ENCODE measurements at regions of chr15 and their contacts with region 1.

Region 1: DNA sequence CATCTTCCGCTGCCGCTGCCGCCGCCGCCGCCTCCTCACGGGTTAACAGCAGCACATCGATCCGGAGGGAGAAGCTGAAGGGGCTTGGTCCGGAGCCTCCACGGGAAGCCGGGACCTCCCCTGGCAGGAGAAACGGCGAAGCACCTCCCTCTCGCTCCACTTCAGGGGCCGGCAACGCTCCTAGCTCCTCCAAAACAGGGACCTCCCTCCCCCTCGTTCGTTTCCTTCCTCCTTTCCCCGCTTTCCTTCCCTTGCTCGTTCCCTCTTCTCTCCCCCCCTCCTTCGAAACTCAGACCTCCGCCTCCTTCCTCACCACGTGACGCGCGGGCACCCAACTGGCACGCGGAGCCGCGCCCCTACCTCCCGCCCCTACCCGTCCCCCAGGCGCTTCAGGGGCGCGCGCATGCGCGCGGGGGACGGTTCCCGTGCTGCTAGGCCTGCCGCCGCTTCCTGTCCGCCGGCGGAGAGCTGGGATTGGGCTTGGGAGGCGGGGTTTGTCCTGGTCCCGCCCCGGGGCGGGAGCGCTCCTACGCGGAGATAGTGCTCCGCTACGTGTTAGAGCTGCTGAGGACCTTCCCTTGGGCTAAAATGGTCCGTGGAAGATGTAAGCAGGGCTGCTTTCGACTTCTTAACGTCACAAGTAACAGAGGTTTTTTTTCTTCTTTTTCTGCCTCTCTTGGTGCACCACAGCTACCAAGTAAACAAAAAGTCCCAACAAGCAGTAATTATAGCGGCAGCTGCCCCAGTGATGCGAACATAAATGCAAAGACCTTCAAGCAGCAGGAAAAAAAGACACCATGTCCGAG is at the start of gene ADAM10:
- DNase-seq: peak; percentile 100
- total RNA-seq, gene ADAM10: 85.9 TPM

Region 2: DNA sequence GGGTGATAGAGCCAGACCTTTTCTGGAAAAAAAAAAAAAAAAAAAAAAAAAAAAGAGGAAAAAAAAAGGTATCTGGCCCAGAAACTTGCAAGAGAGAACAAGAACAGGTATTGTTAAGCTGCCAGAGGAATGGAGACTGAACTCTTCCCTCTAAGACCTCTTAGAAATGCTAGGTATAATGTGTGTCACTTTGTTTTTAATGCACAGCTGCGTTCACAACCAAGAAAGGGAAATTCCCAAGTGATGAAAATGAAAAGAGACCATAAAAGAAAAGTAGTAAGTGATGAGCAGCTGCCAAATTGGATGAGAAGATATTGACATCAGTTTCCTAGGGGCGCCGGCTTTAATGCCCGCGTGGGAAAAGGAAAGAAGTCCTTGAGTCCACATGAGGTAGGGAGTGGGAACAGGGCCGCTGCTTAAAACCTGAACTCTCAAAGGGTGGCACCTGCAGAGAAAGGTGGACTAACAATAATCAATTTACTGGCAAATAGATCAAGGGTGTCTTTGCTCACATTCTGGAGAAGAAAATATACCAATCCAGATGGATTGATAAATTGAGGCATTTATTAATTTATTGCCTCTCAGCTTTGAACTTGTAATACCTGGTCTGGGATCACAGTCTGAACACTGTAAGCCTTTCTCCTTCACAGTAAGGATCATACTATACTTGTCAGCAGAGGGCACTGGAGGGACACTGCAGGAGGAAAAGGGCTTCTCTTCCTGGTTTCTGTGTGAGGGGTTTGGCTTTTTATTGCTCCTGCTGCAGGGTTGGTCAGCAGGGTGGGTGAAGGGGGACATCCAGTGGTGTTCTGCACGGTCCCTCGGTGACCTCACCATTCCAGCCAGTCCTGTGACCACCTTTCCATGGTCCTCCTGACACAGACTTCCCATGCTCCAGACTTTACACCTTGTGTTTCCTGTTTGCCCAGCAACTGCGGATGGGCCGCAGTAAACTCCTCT is 480.0 kb before region 1 on chr15:
- intact Hi-C with region 1: loop called (anchors 5 kb)
- DNase-seq: no peak

Region 3: DNA sequence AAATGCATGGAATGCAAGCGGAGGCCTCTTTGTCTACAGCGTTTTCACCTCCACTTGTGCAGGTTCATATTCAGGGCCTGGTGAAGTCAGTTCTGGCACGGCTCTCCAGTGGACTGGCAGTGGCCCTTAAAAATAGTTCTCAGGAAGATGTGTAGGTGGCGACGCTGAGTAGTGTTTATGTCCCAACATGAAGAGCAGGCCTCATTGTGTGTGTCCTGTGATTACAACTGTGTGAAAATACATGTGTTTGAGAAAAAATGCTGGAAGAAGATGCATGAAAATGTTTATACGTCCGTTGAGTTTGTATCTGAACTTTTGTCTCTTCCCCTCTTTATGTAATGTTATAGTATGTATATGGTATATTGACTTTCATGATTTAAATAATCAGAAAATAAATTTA is 310.8 kb before region 1 on chr15:
- intact Hi-C with region 1: loop called (anchors 5 kb)
- DNase-seq: no peak

Region 4: DNA sequence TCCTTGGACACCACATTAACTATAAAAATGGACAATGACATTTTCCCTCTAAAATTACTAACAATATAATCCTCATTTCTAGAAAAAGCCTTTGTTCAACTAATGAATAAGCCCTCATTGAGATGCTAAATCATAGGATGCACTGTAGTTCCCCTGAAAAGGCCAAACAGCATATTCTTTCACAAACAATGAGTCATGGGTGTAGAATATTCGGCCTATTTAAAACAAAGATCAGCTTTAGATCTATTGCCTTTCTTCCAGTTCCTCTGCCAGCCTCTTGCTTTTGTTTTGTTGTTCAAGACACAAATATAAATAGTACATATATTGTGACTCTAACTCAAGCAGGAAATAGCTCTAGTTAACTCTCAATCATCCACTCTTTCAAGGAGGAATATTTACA is 82.8 kb before region 1 on chr15:
- intact Hi-C with region 1: loop called (anchors 5 kb)
- DNase-seq: no peak

Region 5: DNA sequence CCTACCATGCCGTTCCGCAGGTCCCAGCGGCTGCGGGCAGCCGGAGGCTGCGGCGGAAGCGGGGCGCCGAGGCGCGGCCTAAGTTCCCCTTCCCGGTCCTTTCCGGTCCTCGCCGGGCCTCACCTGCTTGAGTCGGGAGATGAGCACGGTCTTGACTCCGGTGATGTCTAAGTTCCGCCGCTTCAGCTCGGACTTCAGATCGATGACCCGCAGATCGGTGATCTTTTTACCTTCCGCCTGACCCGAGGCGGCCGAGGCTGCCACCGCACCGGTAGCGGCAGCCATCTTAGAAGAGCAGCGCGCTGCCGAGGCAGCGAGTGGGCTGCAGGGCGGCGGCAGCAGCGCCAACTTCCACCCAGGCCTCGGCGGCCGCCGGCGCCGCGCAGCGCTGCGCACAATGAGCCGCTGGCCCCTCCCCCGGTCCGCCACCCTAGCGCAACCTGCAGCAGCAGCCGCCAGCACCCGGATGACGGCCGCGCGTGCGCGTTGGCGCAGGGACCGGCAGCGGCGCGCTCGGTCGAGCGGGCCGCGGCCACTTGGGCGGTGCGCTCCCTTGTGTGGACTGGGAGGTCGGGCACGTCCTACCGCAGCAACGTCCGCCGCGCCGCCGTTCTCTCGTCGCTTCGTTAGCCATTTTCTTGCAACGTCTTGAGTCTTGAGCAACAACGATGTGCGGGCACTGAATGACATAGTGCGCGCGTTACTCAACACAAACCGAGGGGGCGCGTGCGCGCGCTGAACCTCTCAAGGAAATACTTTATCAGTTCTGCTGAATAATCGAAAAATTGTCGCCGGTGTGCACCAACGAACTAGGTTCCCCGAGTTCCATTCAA is 183.8 kb after region 1 on chr15 and contains the start of gene SLTM:
- intact Hi-C with region 1: loop called (anchors 10 kb)
- DNase-seq: peak; percentile 97
- total RNA-seq, gene SLTM: 60.9 TPM

Measured in cardiac septum (tissue), 1 donor.